Mammary epithelial cell (primary cell): ENCODE measurements at regions of chr7 and their contacts with region 1.

Region 1: GRCh38 chr7:23273141-23273599 is 26.0 kb upstream of the MALSU1 start:
- DNase-seq: peak; percentile 88
- H3K4me3 ChIP-seq: no peak overlapping the region
- H3K27ac ChIP-seq: no peak overlapping the region
- H3K4me1 ChIP-seq: peaks cover 5% of the 10 kb centered on the region
- H3K27me3 ChIP-seq: no peaks in the 10 kb centered on the region
- CTCF ChIP-seq: peak; percentile 82 to 94

Region 2: DNA sequence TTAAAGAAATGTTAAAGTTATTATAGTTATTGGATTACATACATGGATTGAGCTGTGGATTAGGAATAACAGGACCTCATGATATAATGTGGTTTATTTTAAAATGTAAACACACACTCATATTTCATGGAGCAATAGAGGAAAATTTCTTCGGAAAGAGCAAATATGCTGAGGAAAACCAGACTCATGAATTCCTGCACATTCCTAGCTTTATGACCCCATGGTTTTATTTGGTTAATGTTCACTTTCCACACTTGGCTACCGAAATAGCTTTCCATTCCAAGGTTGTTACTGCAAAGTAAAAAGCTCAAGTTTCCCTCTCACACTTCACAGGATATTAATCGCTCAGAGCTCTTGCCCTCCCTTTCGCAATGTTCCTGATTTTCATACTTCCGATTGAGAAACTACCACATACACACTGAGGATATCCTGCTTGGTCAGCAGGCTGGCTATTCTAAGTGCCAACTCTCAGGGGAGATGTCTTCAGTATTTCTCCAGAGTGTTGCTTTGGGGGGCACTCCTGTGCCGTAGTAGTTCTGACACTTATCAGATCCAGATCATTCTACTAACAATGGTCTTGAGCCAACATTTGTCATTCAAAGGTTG is 695.7 kb before region 1 on chr7:
- CTCF ChIA-PET with region 1: interaction called, 16 read pairs
- dilution Hi-C with region 1: no loop called
- in situ Hi-C with region 1: no loop called
- intact Hi-C with region 1: no loop called
- DNase-seq: peak; percentile 87
- H3K4me3 ChIP-seq: no peak overlapping the region
- H3K27ac ChIP-seq: peak overlapping the region; percentile 73
- H3K4me1 ChIP-seq: peaks cover 35% of the 10 kb centered on the region
- H3K27me3 ChIP-seq: no peaks in the 10 kb centered on the region
- CTCF ChIP-seq: no peak

Region 3: GRCh38 chr7:23357190-23358093 is 84.3 kb after region 1 on chr7:
- CTCF ChIA-PET with region 1: no interaction called
- dilution Hi-C with region 1: no loop called
- in situ Hi-C with region 1: no loop called
- intact Hi-C with region 1: loop called (anchors 1 kb)
- DNase-seq: peak; percentile 81
- H3K4me3 ChIP-seq: peak overlapping the region in 1 of 3 experiments; percentile 15
- H3K27ac ChIP-seq: peak overlapping the region; percentile 15
- H3K4me1 ChIP-seq: peaks cover 22% of the 10 kb centered on the region
- H3K27me3 ChIP-seq: no peaks in the 10 kb centered on the region
- CTCF ChIP-seq: peak; percentile 28 to 40

Region 4: GRCh38 chr7:23462846-23463245 is 189.7 kb after region 1 on chr7:
- CTCF ChIA-PET with region 1: interaction called, 9 read pairs
- dilution Hi-C with region 1: no loop called
- in situ Hi-C with region 1: no loop called
- intact Hi-C with region 1: loop called (anchors 1 kb)
- DNase-seq: no peak
- H3K4me3 ChIP-seq: no peak overlapping the region
- H3K27ac ChIP-seq: no peak overlapping the region
- H3K4me1 ChIP-seq: no peaks in the 10 kb centered on the region
- H3K27me3 ChIP-seq: peaks cover 9% of the 10 kb centered on the region
- CTCF ChIP-seq: peak; percentile 2 to 54

Region 5: GRCh38 chr7:23474094-23474828 is 201.1 kb after region 1 on chr7:
- CTCF ChIA-PET with region 1: no interaction called
- dilution Hi-C with region 1: no loop called
- in situ Hi-C with region 1: loop called in 1 of 2 experiments (anchors 10 kb)
- intact Hi-C with region 1: no loop called
- DNase-seq: peak; percentile 91
- H3K4me3 ChIP-seq: peak overlapping the region; percentile 47 to 67 (median 62)
- H3K27ac ChIP-seq: no peak overlapping the region
- H3K4me1 ChIP-seq: peaks cover 19% of the 10 kb centered on the region
- H3K27me3 ChIP-seq: peaks cover 40% of the 10 kb centered on the region
- CTCF ChIP-seq: no peak

Region 6: DNA sequence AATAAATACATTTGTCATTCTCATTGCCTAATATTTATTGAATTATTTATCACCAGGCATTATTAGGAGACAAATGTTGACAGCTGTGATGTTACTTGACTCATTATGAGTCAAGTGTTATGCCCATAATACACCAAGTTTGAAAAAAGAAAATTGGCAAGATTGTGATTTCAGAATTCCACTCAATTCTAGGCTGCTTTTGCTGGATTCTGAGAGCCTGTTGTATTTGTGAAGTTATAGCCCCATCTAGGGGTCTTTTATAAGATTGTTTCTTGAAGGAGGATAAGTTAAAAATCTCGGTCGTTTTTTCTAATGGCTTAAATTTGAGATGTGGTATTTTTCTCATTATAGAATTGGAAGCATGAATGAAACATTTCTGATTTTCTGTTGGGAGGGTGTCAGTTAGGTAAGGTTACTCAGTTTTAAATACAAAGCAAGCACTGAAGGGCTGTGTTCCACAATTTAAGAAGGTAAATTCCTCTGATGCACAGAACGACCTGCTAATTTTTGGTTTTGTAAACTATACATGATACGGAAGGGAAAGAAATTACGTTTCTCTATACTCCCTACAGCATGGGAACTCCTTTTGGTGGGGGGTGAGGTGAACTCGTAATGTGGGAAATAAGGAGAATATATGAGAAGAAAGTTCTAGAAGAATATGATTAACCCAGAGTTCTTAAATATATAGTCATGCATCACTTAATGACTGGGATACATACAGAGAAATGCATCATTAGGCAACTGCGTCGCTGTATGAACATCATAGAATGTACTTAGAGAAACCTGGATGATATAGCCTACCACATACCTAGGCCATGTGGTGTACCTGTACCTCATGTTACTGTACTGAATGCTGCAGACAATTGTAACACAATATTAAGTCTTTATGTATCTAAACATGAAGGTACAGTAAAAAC is 439.5 kb after region 1 on chr7:
- CTCF ChIA-PET with region 1: interaction called, 5 read pairs
- dilution Hi-C with region 1: no loop called
- in situ Hi-C with region 1: loop called (anchors 25 kb)
- intact Hi-C with region 1: loop called (anchors 1 kb)
- DNase-seq: peak; percentile 60
- H3K4me3 ChIP-seq: no peak overlapping the region
- H3K27ac ChIP-seq: no peak overlapping the region
- H3K4me1 ChIP-seq: peaks cover 20% of the 10 kb centered on the region
- H3K27me3 ChIP-seq: no peaks in the 10 kb centered on the region
- CTCF ChIP-seq: peak; percentile 35 to 46